Esophagus muscularis mucosa (tissue), 4 donors: ENCODE measurements at regions of chr2 and their contacts with region 1.

Region 1: DNA sequence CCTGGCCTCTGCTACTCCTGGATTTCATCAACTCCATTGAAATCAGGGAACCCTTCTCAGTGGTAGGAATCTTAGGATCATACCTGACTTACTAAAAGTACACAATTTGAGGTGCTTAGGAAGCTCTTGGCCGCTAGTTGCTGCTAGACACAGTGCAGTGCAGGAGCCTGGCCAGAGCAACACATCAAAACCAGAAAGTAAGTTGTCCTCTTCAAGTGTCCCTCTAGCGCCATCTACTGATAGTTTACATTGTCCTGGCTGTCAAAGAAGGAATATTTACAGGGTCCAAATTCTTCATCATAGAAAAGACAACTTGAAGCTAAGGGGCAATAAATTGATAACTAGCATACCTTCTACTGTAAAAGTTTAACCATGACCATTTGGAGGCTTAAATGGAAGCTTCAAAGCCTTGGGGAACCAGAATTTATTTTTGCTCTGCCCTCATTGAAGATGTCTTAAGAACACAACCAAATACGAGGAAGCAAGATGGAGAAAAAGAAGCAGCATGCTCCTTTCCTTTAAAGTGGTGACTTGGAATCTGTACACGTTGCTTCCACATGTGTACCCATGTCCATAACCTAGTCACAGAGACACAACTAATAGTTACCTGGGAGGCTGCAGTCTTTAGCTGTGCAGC is 889.1 kb upstream of the GCFC2 start:
- DNase-seq: no peak
- H3K4me3 ChIP-seq: no peak overlapping the region
- H3K27ac ChIP-seq: no peak overlapping the region
- H3K4me1 ChIP-seq: no peaks in the 10 kb centered on the region
- H3K27me3 ChIP-seq: no peaks in the 10 kb centered on the region
- CTCF ChIP-seq: peak; percentile 19 to 55 (median 45)
- EP300 ChIP-seq: no peak
- POLR2A ChIP-seq: no peak

Region 2: GRCh38 chr2:75787532-75788132 is 812.2 kb before region 1 on chr2:
- intact Hi-C with region 1: loop called (anchors 5 kb)
- DNase-seq: no peak
- H3K4me3 ChIP-seq: no peak overlapping the region
- H3K27ac ChIP-seq: no peak overlapping the region
- H3K4me1 ChIP-seq: no peaks in the 10 kb centered on the region
- H3K27me3 ChIP-seq: no peaks in the 10 kb centered on the region
- CTCF ChIP-seq: peak in 1 of 3 experiments; percentile 39
- EP300 ChIP-seq: no peak
- POLR2A ChIP-seq: no peak

Region 3: GRCh38 chr2:76197842-76198448 is 401.9 kb before region 1 on chr2:
- intact Hi-C with region 1: loop called (anchors 10 kb)
- DNase-seq: no peak
- H3K4me3 ChIP-seq: no peak overlapping the region
- H3K27ac ChIP-seq: no peak overlapping the region
- H3K4me1 ChIP-seq: no peaks in the 10 kb centered on the region
- H3K27me3 ChIP-seq: no peaks in the 10 kb centered on the region
- CTCF ChIP-seq: peak; percentile 38 to 72 (median 60)
- EP300 ChIP-seq: no peak
- POLR2A ChIP-seq: no peak

Region 4: GRCh38 chr2:76281156-76281841 is 318.6 kb before region 1 on chr2:
- intact Hi-C with region 1: no loop called
- DNase-seq: no peak
- H3K4me3 ChIP-seq: no peak overlapping the region
- H3K27ac ChIP-seq: no peak overlapping the region
- H3K4me1 ChIP-seq: no peaks in the 10 kb centered on the region
- H3K27me3 ChIP-seq: no peaks in the 10 kb centered on the region
- CTCF ChIP-seq: no peak
- EP300 ChIP-seq: no peak
- POLR2A ChIP-seq: no peak

Region 5: DNA sequence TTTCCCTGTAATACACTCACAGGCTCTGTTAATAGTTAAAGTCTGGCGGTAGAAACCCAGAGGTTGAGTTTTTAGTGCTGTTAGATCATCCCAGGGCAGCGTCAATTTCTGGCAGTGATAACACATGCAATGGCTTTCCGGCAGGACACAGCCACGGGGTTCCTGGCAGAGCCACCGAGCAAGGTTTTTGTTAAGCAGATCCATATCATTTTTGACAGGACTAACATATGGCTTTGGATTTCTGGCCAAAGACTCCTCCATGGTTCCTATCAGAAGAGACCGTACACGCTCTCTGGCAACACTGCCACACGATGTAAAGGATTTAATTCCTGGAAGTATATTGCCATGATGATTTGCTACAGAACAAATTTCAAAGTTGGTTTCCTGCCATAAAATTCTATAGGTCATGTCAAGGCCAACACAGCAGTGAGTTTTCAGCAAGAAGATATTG is 68.0 kb after region 1 on chr2:
- intact Hi-C with region 1: no loop called
- DNase-seq: no peak
- H3K4me3 ChIP-seq: no peak overlapping the region
- H3K27ac ChIP-seq: no peak overlapping the region
- H3K4me1 ChIP-seq: no peaks in the 10 kb centered on the region
- H3K27me3 ChIP-seq: no peaks in the 10 kb centered on the region
- CTCF ChIP-seq: no peak
- EP300 ChIP-seq: no peak
- POLR2A ChIP-seq: no peak